Activated CD4-positive, alpha-beta memory T cell treated with anti-CD3 and anti-CD28 coated beads for 36 hours (primary cell): ENCODE measurements at regions of chr9 and their contacts with region 1.

Region 1: DNA sequence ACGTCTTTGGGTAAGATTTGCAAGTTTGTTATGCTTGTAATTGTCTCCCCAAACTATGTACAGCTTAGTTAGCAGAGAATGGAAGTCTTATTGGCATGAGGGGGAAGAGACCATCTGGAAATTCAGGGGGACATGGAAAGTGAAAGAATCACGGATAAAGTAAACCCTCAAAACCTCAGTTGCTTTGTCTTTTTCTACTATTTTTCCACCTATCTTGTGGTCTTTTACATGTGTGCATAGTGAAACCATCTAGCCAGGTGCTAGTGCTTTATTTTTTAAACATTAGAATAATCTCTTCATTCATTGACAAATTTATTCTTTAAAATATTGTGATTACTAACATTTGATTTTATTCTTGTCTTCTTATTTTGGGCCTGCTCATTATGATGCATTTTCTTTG is 441.1 kb upstream of the RORB start:
- DNase-seq: no peak
- H3K4me3 Mint-ChIP-seq: no peak overlapping the region
- H3K27ac Mint-ChIP-seq: no peak overlapping the region
- H3K4me1 Mint-ChIP-seq: no peaks in the 10 kb centered on the region
- H3K27me3 Mint-ChIP-seq: no peaks in the 10 kb centered on the region

Region 2: DNA sequence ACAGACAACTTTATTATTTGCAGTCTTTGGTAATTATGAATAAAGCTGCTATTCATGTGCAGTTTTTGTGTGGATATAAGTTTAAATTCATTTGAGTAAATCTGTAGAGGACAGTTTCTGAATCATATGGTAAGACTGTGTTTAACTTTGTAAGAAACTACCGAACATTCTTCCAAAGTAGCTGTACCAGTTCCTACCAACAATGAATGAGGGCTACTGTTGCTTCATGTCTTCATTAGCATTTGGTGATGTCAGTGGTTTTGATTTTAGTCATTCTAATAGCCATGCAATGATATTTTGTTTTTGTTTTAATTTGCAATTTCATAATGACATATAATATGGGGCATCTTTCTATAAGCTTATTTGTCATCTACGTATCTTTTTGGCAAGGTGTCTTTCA is 60.2 kb before region 1 on chr9:
- CTCF ChIA-PET with region 1: no interaction called
- POLR2A ChIA-PET with region 1: no interaction called
- intact Hi-C with region 1: loop called (anchors 10 kb)
- DNase-seq: no peak
- H3K4me3 Mint-ChIP-seq: no peak overlapping the region
- H3K27ac Mint-ChIP-seq: no peak overlapping the region
- H3K4me1 Mint-ChIP-seq: no peaks in the 10 kb centered on the region
- H3K27me3 Mint-ChIP-seq: no peaks in the 10 kb centered on the region